Activated naive CD4-positive, alpha-beta T cell treated with anti-CD3 and anti-CD28 coated beads for 36 hours (primary cell): ENCODE measurements at regions of chr1 and their contacts with region 1.

Region 1: DNA sequence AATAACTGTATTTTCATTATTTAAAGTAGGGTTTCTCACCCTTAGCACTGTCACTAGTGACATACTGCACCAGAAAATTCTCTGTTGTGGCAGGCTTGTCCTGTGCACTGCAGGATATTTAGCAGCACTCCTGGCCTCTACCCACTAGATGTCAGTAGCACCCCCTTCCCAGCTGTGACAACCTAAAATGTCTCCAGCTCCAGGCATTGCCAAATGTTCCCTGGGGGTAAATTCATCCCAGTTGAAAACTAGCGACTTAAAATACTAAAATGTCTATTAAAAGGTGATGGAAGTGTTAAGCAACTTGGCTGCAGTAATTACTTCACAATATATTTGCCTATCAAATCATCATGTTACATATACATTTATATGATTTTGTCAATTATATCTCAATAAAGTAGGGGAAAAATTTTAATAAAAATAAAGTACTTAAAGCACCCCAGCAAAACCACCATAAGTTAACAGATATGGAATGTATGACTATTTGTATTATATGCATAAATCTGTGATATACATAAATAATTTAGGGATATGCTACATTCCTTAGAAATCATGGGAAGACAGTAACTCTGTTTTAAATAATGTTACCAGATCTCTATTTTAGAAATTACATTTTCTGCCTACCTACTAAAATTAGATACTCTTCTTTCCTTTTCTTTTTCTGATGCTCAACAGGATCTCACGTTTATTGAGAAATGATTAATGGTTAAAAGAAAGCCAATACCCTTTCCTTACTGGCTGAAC is 74.6 kb downstream of the ARID4B start:
- DNase-seq: peak; percentile 79
- H3K4me3 Mint-ChIP-seq: no peak overlapping the region
- H3K27ac Mint-ChIP-seq: no peak overlapping the region
- H3K4me1 Mint-ChIP-seq: peaks cover 30% of the 10 kb centered on the region
- H3K27me3 Mint-ChIP-seq: no peaks in the 10 kb centered on the region

Region 2: DNA sequence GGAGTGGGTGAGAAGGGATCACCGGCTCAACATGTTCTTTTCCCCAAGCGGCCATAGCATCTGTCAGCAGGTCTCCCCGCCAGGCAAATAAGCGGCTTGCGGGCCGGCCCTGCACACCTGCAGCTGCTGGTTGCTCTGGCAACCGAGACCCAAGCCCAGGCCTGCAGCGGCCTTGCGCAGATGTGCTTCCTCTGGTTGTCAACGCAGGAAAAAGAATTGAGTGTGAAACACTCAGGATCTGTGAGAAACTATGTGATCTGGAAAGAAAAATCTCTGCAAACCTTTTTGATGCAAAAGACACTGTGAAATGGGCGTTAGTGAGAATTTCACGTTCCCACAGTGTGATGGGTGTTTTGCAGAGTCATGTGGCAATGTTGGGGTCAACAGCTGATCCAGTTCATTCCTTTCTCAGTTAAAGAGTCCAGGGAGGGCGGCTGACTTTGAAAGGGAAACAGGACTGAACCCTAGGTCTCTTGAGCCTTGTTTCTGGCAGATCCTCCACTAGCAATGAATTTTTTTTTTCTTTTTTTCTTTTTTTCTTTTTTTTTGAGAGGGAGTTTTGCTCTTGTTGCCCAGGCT is 153.1 kb before region 1 on chr1:
- CTCF ChIA-PET with region 1: no interaction called
- intact Hi-C with region 1: loop called (anchors 5 kb)
- DNase-seq: no peak
- H3K4me3 Mint-ChIP-seq: no peak overlapping the region
- H3K27ac Mint-ChIP-seq: no peak overlapping the region
- H3K4me1 Mint-ChIP-seq: peaks cover 28% of the 10 kb centered on the region
- H3K27me3 Mint-ChIP-seq: no peaks in the 10 kb centered on the region

Region 3: GRCh38 chr1:235128456-235129328 is 124.7 kb before region 1 on chr1 and contains the start of gene TOMM20:
- CTCF ChIA-PET with region 1: no interaction called
- intact Hi-C with region 1: loop called (anchors 5 kb)
- DNase-seq: peak; percentile 98
- H3K4me3 Mint-ChIP-seq: peak within 1 kb of the TSS; percentile 96
- H3K27ac Mint-ChIP-seq: peak within 1 kb of the TSS; percentile 94
- H3K4me1 Mint-ChIP-seq: peaks cover 38% of the 10 kb centered on the region
- H3K27me3 Mint-ChIP-seq: no peaks in the 10 kb centered on the region
- total RNA-seq, gene TOMM20: 155 to 192 TPM

Region 4: DNA sequence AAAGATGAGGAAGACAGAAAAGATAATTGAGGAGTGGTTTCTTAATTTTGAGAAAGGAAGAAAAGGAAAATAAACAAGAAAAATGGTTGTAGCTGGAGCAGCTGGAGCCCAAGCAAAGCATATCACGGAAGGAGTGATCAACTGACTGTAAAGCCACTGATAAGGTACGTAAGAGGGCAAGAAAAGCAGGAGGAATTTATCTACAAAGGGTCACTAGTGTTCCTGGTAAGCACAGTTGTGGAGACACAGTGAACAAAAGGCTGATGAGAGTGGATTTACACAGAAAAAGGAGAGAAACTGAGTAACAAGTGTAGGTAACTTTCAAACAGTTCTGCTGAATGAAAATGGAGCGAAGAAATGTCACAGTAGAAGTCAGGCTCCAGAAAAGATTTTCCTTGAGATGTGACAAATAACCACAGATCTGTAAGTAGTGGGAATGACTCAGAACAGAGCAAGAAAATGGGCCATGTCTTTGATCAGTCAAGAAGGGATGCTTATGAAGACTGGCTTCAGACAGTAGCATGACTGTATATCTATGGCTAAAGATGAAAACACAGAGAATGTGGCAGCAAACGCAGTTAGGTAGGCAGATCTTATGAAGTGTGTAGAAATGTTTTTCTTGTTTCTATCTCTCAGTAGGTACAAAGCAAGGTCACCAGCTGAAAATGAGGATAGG is 46.7 kb before region 1 on chr1:
- CTCF ChIA-PET with region 1: interaction called, 5 read pairs
- intact Hi-C with region 1: loop called (anchors 2 kb)
- DNase-seq: peak; percentile 35
- H3K4me3 Mint-ChIP-seq: peak overlapping the region; percentile 19
- H3K27ac Mint-ChIP-seq: peak overlapping the region; percentile 83
- H3K4me1 Mint-ChIP-seq: peaks cover 28% of the 10 kb centered on the region
- H3K27me3 Mint-ChIP-seq: no peaks in the 10 kb centered on the region

Region 5: GRCh38 chr1:235270625-235271024 is 17.2 kb after region 1 on chr1:
- CTCF ChIA-PET with region 1: interaction called, 7 read pairs
- intact Hi-C with region 1: loop called (anchors 2 kb)
- DNase-seq: no peak
- H3K4me3 Mint-ChIP-seq: no peak overlapping the region
- H3K27ac Mint-ChIP-seq: peak overlapping the region; percentile 75
- H3K4me1 Mint-ChIP-seq: peaks cover 65% of the 10 kb centered on the region
- H3K27me3 Mint-ChIP-seq: no peaks in the 10 kb centered on the region

Region 6: GRCh38 chr1:235367000-235367908 is 113.9 kb after region 1 on chr1 and contains the start of gene TBCE:
- CTCF ChIA-PET with region 1: no interaction called
- intact Hi-C with region 1: loop called (anchors 1 kb)
- DNase-seq: peak; percentile 92
- H3K4me3 Mint-ChIP-seq: peak within 1 kb of the TSS; percentile 96
- H3K27ac Mint-ChIP-seq: peak within 1 kb of the TSS; percentile 90
- H3K4me1 Mint-ChIP-seq: peaks cover 27% of the 10 kb centered on the region
- H3K27me3 Mint-ChIP-seq: no peaks in the 10 kb centered on the region
- total RNA-seq, gene TBCE: 18.8 to 22.1 TPM